IMR-90 (cell line): ENCODE measurements at regions of chrX and their contacts with region 1.

Region 1: GRCh38 chrX:81195712-81196111 is 6.0 kb downstream of the HMGN5 start:
- DNase-seq: peak; percentile 52
- ATAC-seq: peak; percentile 54; the same call in 1 of the 2 replicates
- H3K4me3 ChIP-seq: no peak overlapping the region
- H3K27ac ChIP-seq: no peak overlapping the region
- H3K4me1 ChIP-seq: no peaks in the 10 kb centered on the region
- H3K27me3 ChIP-seq: no peaks in the 10 kb centered on the region
- CTCF ChIP-seq: peak; percentile 53
- POLR2A ChIP-seq: no peak
- RAD21 ChIP-seq: peak; percentile 35

Region 2: DNA sequence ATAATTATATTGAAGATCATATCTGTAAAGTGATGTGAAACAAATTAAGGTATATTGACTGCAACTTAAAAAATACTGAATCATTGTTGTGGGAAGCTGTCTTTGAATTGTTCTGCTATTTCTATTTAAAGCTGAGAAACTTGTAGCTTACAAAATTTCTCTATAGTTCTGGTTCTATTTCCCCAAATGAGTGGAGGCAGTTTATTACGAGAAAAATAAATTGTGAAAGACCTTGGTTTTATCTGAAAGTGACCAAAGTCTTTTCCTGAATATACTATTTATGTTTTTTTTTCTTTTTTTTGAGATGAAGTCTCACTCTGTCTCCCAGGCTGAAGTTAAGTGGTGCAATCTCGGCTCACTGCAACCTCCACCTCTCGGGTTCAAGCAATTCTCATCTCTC is 171.6 kb after region 1 on chrX:
- CTCF ChIA-PET with region 1: no interaction called
- POLR2A ChIA-PET with region 1: no interaction called
- dilution Hi-C with region 1: no loop called
- in situ Hi-C with region 1: loop called (anchors 10 kb)
- intact Hi-C with region 1: no loop called
- DNase-seq: no peak
- ATAC-seq: no peak
- H3K4me3 ChIP-seq: no peak overlapping the region
- H3K27ac ChIP-seq: no peak overlapping the region
- H3K4me1 ChIP-seq: no peaks in the 10 kb centered on the region
- H3K27me3 ChIP-seq: no peaks in the 10 kb centered on the region; the same call in 1 of the 2 replicates
- CTCF ChIP-seq: no peak
- POLR2A ChIP-seq: no peak
- RAD21 ChIP-seq: no peak